ENCODE measurements at regions of chr20 and their contacts with region 1.

Region 1: GRCh38 chr20:38221119-38221589 is 39.4 kb downstream of the KIAA1755 start:
- DNase-seq: no peak
- H3K4me3 ChIP-seq: 0 out of 2 replicates have a peak overlapping the region, but pooled peaks have one; percentile 29
- H3K27ac ChIP-seq: no peak overlapping the region
- H3K27me3 ChIP-seq: no peaks in the 10 kb centered on the region
- CTCF ChIP-seq: peak; percentile 96

Region 2: GRCh38 chr20:37519508-37520128 is 701.5 kb before region 1 on chr20:
- CTCF ChIA-PET with region 1: interaction called, 10 read pairs
- POLR2A ChIA-PET with region 1: no interaction called
- DNase-seq: no peak
- H3K4me3 ChIP-seq: no peak overlapping the region
- H3K27ac ChIP-seq: no peak overlapping the region
- H3K27me3 ChIP-seq: no peaks in the 10 kb centered on the region
- CTCF ChIP-seq: no peak

Region 3: GRCh38 chr20:37845241-37845711 is 375.9 kb before region 1 on chr20:
- CTCF ChIA-PET with region 1: no interaction called
- POLR2A ChIA-PET with region 1: no interaction called
- DNase-seq: no peak
- H3K4me3 ChIP-seq: no peak overlapping the region
- H3K27ac ChIP-seq: no peak overlapping the region
- H3K27me3 ChIP-seq: no peaks in the 10 kb centered on the region
- CTCF ChIP-seq: no peak

Region 4: GRCh38 chr20:37990571-37991151 is 230.5 kb before region 1 on chr20:
- CTCF ChIA-PET with region 1: interaction called, 10 read pairs
- POLR2A ChIA-PET with region 1: no interaction called
- DNase-seq: peak; percentile 59
- H3K4me3 ChIP-seq: no peak overlapping the region
- H3K27ac ChIP-seq: no peak overlapping the region
- H3K27me3 ChIP-seq: no peaks in the 10 kb centered on the region
- CTCF ChIP-seq: no peak

Region 5: DNA sequence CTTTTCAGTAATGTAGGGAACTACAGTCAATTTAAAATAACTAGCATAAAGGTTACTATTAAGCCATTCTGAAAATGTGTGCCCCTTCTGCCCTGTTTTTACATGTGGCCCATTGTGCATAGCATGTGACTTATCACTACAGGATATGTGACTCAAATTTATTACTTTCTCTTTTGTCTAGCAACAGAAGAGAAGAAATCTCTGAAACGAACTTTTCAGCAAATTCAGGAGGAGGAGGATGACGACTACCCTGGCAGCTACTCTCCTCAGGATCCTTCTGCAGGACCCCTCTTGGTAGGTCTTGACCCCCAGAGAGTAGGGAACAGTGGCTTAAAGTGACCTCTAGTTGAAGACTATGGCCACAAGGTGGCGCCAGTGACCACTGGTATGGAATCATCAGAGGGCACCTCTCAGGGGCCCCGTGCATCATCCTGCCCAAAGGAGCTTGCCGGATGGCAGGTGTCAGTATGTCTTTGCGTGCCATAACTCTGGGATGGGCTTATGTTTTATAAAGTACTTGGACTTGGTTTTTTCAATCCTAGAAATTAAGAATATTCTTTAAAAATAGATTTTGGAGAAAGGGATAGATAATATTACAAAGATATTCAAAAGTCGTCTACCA is 163.7 kb before region 1 on chr20:
- CTCF ChIA-PET with region 1: interaction called, 459 read pairs
- POLR2A ChIA-PET with region 1: interaction called, 6 read pairs
- DNase-seq: no peak
- H3K4me3 ChIP-seq: no peak overlapping the region
- H3K27ac ChIP-seq: no peak overlapping the region
- H3K27me3 ChIP-seq: no peaks in the 10 kb centered on the region
- CTCF ChIP-seq: peak; percentile 86

Region 6: DNA sequence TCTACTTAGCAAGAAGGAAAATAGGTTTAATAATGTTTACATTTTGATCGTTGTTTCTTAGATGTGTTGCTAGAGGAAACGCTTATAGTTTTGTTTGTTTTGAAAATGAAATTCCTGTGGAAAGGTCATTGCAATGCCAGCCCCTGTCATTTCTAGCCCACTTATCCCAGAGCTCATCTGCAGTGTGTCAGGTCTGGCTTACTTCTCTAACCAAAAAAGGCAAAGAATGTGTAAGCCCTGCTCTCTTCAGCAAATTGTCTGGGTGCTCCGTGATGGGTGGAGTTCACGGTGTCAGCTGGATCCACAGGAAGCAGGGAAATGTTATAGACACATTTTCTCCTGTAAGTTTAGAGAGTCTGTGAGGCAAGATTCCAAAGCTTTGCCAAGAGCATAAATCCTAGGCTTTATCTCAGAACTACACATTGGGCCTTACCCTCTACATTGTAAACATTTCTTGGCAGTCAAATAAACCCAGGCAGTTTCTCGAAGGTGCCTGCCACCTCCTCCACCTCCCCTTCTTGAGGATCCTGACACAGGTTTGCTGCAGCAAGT is 136.7 kb before region 1 on chr20:
- CTCF ChIA-PET with region 1: interaction called, 10 read pairs
- POLR2A ChIA-PET with region 1: no interaction called
- DNase-seq: peak; percentile 78
- H3K4me3 ChIP-seq: no peak overlapping the region
- H3K27ac ChIP-seq: peak overlapping the region; percentile 89
- H3K27me3 ChIP-seq: no peaks in the 10 kb centered on the region
- CTCF ChIP-seq: no peak

Region 7: DNA sequence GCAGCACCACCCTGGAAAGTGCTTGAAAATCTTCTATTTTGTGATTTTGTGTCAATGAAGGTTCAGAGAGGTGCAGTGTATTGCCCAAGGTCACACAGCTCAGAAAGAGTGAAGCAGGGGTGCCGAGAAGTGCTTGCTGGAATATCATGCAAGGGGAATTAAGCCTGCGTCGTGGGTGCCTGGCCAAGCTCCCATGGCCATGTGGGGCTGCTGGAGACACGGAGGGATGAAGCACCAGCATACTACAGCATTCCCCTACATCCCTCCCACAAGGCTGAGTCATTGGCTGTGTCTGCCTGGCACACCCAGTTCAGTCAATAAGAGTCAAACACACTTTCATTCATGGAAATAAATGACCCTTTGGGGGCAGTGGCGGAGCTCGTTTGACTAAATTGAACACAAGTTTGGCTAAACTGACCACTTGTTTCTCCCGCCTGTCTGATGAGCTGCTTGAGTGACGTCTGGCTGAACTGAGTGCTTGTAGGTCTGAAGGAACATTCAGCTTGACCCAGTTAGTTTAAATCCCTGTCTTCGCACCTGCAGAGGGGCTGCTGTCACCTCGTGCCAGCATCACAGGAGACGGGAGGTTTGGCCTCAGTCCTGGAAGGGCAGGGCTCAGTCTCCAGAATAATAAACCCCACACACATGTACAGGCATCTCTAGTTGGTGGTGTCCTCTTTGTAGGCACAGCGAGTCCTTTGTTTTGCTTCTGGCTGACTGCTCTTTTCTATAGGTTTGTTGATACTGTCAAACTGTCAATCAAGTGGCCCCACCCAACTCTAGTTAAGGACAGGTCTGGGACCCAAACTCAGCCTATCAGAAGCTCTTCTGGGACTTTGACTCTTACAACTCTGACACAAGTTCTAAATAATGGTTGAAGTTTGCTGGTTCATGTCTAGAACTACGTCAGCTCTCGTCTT is 47.7 kb before region 1 on chr20:
- CTCF ChIA-PET with region 1: interaction called, 42 read pairs
- POLR2A ChIA-PET with region 1: interaction called, 4 read pairs
- DNase-seq: peak; percentile 43
- H3K4me3 ChIP-seq: no peak overlapping the region
- H3K27ac ChIP-seq: peak overlapping the region; percentile 42
- H3K27me3 ChIP-seq: no peaks in the 10 kb centered on the region
- CTCF ChIP-seq: peak; percentile 13; the same call in 1 of the 2 replicates

Region 8: DNA sequence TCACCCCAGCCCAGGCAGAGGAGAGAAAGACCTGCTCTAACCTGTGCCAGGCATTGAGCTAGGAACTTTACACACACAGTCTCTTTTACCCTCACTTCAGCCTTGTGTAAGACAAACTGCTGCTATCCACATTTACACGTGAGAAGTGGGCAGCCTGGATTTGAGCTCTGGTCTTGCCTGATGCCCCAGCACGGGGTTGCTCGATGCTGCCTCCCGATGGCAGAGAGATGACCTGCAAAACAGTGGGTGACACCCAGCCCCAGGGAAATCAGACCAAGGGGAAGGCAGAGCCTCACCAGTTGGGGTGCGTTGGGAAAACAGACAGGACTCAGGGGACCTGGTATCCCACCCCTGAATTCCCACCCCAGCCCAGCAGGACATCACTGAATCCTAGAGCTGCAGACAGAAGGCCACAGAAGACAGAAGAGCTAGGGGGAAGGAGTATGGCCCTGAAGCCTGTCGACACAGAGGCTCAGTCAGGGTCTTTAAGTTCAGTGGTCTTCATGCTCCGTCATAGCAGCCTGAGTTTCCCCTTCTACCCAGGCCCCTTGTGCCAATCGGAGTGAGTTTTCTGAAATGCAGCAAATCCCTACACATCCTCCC is 83.8 kb after region 1 on chr20:
- CTCF ChIA-PET with region 1: interaction called, 12 read pairs
- POLR2A ChIA-PET with region 1: no interaction called
- DNase-seq: no peak
- H3K4me3 ChIP-seq: no peak overlapping the region
- H3K27ac ChIP-seq: no peak overlapping the region
- H3K27me3 ChIP-seq: peaks cover 20% of the 10 kb centered on the region
- CTCF ChIP-seq: peak; percentile 65

Region 9: DNA sequence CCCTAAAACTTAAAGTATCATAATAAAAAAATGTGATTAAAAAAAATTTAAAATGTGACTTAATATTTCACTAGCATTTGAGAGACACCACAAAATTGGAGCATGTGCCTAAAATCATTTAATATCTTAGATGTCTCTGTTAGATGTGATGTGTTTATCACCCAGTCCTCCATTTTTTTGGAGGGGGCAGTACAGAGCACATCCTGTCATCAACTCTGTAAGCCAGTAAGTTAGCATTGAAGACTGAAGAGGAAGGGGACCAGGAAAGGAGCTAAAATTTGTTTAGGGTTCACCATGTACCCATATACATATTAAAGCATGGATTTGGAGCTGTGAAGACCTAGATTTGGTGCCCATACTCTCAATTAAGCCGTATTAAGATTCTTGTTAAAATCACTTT is 329.1 kb after region 1 on chr20:
- CTCF ChIA-PET with region 1: no interaction called
- POLR2A ChIA-PET with region 1: no interaction called
- DNase-seq: no peak
- H3K4me3 ChIP-seq: no peak overlapping the region
- H3K27ac ChIP-seq: no peak overlapping the region
- H3K27me3 ChIP-seq: no peaks in the 10 kb centered on the region
- CTCF ChIP-seq: no peak

Measured in AG04450 (cell line).